HepG2 (cell line): ENCODE measurements at regions of chr19 and their contacts with region 1.

Region 1: DNA sequence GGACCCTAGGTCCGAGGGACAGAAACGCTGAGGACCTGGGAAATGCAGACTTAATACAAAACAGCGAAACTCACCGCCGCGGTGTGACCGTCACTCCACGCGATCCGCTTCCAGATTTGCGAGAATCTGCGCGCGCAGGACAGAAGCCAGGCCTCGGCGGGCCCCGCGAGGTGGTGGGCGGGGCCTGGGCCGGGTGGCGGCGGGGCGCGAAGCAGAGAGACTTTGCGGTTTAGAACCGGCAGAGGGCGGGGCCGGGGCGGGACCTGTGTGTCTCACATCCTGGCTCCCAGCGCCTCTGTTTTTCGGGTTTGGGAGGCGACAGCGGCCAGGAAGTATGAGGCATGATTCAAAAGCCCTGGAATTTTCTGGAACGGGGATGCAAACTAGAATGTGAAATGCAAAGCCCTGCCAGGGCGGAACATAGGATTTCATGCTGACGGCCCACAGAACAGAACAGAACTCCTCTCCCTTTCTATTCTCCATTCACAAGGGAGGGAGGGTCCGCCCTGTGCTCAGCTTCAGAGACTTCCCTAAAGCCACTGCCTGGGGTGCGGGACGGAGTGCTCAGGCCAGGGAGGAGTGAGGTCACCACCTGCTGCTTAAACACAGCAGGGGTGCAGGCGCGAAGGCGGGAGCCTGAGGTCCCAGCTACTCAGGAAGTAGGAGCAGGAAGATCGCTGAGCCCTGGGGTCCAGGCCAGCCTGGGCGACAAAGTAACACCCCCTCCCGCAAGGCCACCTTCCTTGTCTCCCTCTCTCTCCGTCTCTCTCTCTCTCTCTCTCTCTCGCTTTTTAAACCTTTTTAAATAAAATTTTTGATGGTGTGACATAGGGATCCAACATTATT is 44.3 kb downstream of the ZNF611 start:
- DNase-seq: peak; percentile 60
- ATAC-seq: peak; percentile 93
- H3K4me3 ChIP-seq: peak overlapping the region; percentile 57 to 77 (median 74); a peak in 5 of 6 replicates
- H3K27ac ChIP-seq: peak overlapping the region; percentile 58
- H3K4me1 ChIP-seq: peaks cover 20% of the 10 kb centered on the region
- H3K27me3 ChIP-seq: no peaks in the 10 kb centered on the region; a peak in 1 of 5 replicates
- CTCF ChIP-seq: peak; percentile 25; the same call in 1 of the 2 replicates
- EP300 ChIP-seq: no peak
- POLR2A ChIP-seq: peak in 1 of 2 experiments; percentile 46; a peak in 1 of 4 replicates
- RAD21 ChIP-seq: no peak

Region 2: GRCh38 chr19:52648336-52649016 is 42.1 kb before region 1 on chr19:
- CTCF ChIA-PET with region 1: no interaction called
- POLR2A ChIA-PET with region 1: no interaction called
- in situ Hi-C with region 1: no loop called
- intact Hi-C with region 1: no loop called
- DNase-seq: no peak
- ATAC-seq: no peak
- H3K4me3 ChIP-seq: no peak overlapping the region
- H3K27ac ChIP-seq: no peak overlapping the region
- H3K4me1 ChIP-seq: no peaks in the 10 kb centered on the region
- H3K27me3 ChIP-seq: no peaks in the 10 kb centered on the region
- CTCF ChIP-seq: no peak
- EP300 ChIP-seq: no peak
- POLR2A ChIP-seq: no peak
- RAD21 ChIP-seq: no peak

Region 3: GRCh38 chr19:53365134-53365898 is 674.7 kb after region 1 on chr19 and contains the start of gene ZNF525:
- CTCF ChIA-PET with region 1: no interaction called
- POLR2A ChIA-PET with region 1: no interaction called
- in situ Hi-C with region 1: loop called (anchors 5 kb)
- intact Hi-C with region 1: no loop called
- DNase-seq: peak; percentile 71
- ATAC-seq: peak; percentile 98
- H3K4me3 ChIP-seq: peak within 1 kb of the TSS; percentile 41 to 63 (median 57); a peak in 5 of 6 replicates
- H3K27ac ChIP-seq: peak within 1 kb of the TSS; percentile 38
- H3K4me1 ChIP-seq: no peaks in the 10 kb centered on the region
- H3K27me3 ChIP-seq: no peaks in the 10 kb centered on the region
- CTCF ChIP-seq: peak; percentile 22; the same call in 1 of the 2 replicates
- EP300 ChIP-seq: no peak
- POLR2A ChIP-seq: peak; percentile 61 to 78
- RAD21 ChIP-seq: no peak
- total RNA-seq, gene ZNF525: 8.7 and 9.9 TPM in 2 replicates